Gastrocnemius medialis (tissue), 4 donors: ENCODE measurements at regions of chr4 and their contacts with region 1.

Region 1: GRCh38 chr4:52824603-52825459 is 37.3 kb upstream of the RASL11B start:
- DNase-seq: peak; percentile 51 to 58
- ATAC-seq: peak; percentile 95 to 97
- H3K4me3 ChIP-seq: no peak overlapping the region
- H3K27ac ChIP-seq: peak overlapping the region; percentile 62 to 73 (median 70)
- H3K4me1 ChIP-seq: peaks cover 19 to 25% of the 10 kb centered on the region in 2 donors
- H3K27me3 ChIP-seq: no peaks in the 10 kb centered on the region
- CTCF ChIP-seq: no peak
- POLR2A ChIP-seq: no peak

Region 2: GRCh38 chr4:52861879-52862616 is 37.2 kb after region 1 on chr4 and contains the start of gene RASL11B:
- in situ Hi-C with region 1: no loop called
- intact Hi-C with region 1: loop called (anchors 5 kb)
- DNase-seq: peak; percentile 53 to 70
- ATAC-seq: peak; percentile 96 to 98
- H3K4me3 ChIP-seq: peak within 1 kb of the TSS; percentile 63 to 80 (median 72)
- H3K27ac ChIP-seq: peak within 1 kb of the TSS; percentile 59 to 72 (median 60)
- H3K4me1 ChIP-seq: peaks cover 4 to 10% of the 10 kb centered on the region in 2 donors
- H3K27me3 ChIP-seq: no peaks in the 10 kb centered on the region
- CTCF ChIP-seq: peak in 3 of 5 experiments; percentile 31 to 64 (median 42)
- POLR2A ChIP-seq: peak; percentile 35 to 74
- total RNA-seq, gene RASL11B: 0.18 TPM in 1 of 4 donors, not detected in the others

Region 3: GRCh38 chr4:52889778-52890520 is 65.1 kb after region 1 on chr4:
- in situ Hi-C with region 1: loop called in 1 of 4 experiments (anchors 10 kb)
- intact Hi-C with region 1: no loop called
- DNase-seq: no peak
- ATAC-seq: no peak
- H3K4me3 ChIP-seq: no peak overlapping the region
- H3K27ac ChIP-seq: no peak overlapping the region
- H3K4me1 ChIP-seq: no peaks in the 10 kb centered on the region
- H3K27me3 ChIP-seq: no peaks in the 10 kb centered on the region
- CTCF ChIP-seq: no peak
- POLR2A ChIP-seq: no peak